ENCODE measurements at regions of chrX and their contacts with region 1.

Region 1: GRCh38 chrX:114959729-114960128 is 57.7 kb downstream of the IL13RA2 start:
- DNase-seq: no peak
- ATAC-seq: no peak

Region 2: DNA sequence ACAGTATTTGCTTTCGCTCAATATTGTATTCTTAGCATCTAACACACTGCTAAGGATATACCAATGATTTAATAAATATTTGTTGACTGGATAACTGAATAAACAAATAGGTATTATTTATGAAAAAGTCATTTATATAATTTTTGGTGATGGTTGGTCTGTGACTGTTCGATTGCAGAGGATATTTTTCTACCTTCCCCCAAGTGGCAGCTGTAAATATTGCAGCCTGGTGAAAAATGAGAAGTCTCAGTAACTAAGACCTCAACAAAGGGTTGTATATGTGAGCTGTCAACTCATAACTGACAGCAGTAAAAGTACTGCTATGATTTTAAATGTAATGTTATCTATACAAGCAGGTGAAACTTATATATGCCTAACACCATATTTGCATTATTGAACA is 339.9 kb before region 1 on chrX:
- intact Hi-C with region 1: loop called (anchors 10 kb)
- DNase-seq: no peak
- ATAC-seq: no peak

Region 3: DNA sequence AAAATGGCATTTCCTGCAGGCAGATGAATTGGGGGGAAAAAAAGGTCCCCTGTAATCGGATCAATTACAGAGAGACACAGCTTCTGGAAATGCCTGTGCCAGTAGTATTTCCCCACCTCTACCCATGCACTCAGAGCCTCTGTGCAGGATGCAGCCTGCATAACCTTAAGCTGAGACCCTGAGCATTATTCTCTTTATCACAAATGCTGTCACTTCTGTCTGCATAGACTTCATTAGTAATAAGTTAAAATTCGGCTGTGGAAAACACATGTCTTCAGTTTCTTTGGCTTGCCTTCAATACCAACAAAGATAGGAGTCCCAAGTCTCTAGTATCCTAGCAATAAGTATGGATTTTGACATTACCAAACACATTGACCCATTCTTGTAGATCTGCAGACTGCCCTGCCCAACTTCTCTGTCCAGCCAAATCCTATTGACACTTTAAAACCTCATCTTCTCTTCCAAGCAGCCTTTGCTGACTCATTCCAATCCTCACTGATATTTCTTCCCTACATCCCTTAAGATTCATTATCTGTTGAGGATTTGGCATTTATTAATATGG is 400.6 kb after region 1 on chrX:
- intact Hi-C with region 1: no loop called
- DNase-seq: no peak
- ATAC-seq: no peak

Measured in left ventricle myocardium superior (tissue), 1 donor.